ENCODE measurements at regions of chr22 and their contacts with region 1.

Region 1: GRCh38 chr22:35539910-35540594 is 579 bp upstream of the RASD2 start:
- DNase-seq: peak in 1 of 2 experiments; percentile 74
- H3K4me3 ChIP-seq: peak overlapping the region; percentile 44 to 73 (median 48)
- H3K27ac ChIP-seq: no peak overlapping the region
- H3K4me1 ChIP-seq: peaks cover 4 to 31% (median 17%) of the 10 kb centered on the region in 4 experiments
- H3K27me3 ChIP-seq: peaks cover 0 to 31% (median 19%) of the 10 kb centered on the region in 4 experiments; a peak in 5 of 7 replicates
- CTCF ChIP-seq: no peak
- EP300 ChIP-seq: no peak
- POLR2A ChIP-seq: no peak
- RAD21 ChIP-seq: no peak

Region 2: GRCh38 chr22:35430897-35431322 is 109.1 kb before region 1 on chr22:
- CTCF ChIA-PET with region 1: interaction called, 10 read pairs
- POLR2A ChIA-PET with region 1: interaction called, 9 read pairs
- DNase-seq: peak; percentile 49 to 98
- H3K4me3 ChIP-seq: no peak overlapping the region
- H3K27ac ChIP-seq: no peak overlapping the region
- H3K4me1 ChIP-seq: peaks cover under 1 to 10% (median 3%) of the 10 kb centered on the region in 4 experiments; a peak in 6 of 7 replicates
- H3K27me3 ChIP-seq: no peaks in the 10 kb centered on the region
- CTCF ChIP-seq: peak; percentile 85 to 98 (median 90)
- EP300 ChIP-seq: no peak
- POLR2A ChIP-seq: no peak
- RAD21 ChIP-seq: peak; percentile 96 to 97

Region 3: GRCh38 chr22:35462498-35463230 is 77.4 kb before region 1 on chr22:
- CTCF ChIA-PET with region 1: no interaction called
- POLR2A ChIA-PET with region 1: no interaction called
- DNase-seq: no peak
- H3K4me3 ChIP-seq: no peak overlapping the region
- H3K27ac ChIP-seq: no peak overlapping the region
- H3K4me1 ChIP-seq: peaks cover 6 to 13% (median 10%) of the 10 kb centered on the region in 4 experiments
- H3K27me3 ChIP-seq: no peaks in the 10 kb centered on the region
- CTCF ChIP-seq: no peak
- EP300 ChIP-seq: no peak
- POLR2A ChIP-seq: no peak
- RAD21 ChIP-seq: no peak

Region 4: DNA sequence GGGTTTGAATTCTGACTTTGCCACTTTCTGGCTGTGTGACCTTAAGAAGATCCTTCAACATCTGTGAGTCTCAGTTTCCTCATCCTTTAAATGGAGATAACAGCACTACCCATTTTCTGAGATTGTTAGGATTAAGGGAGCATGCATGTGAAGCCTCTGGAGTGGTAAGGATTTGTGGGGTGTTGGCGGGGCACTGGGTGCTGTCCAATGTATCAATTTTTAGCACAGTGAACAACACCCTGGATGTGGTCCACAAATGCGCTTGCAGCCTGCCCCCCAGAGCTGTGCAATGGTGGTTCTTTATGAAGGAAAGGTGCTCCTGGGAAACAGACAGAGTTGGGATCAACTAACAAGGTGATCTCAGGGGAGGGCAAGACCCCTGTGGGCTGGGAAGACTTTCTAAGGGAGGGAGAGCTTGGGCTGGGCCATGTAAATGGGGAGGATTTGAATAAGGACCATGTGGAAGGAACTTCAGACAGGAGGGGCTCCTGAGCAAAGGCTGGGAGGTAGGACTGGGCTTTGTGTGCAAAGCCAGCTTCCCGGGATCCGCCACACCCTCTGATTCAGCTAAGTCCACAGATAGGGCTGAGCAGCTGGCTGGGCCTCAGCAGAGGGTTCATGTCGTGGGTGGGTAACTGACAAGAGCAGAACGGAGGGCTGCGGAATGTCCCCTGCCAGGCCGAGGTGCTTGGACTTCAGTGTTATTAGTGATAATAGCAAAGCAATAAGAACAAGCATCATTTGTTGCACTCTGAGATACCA is 22.1 kb before region 1 on chr22:
- CTCF ChIA-PET with region 1: interaction called, 37 read pairs
- POLR2A ChIA-PET with region 1: interaction called, 3 read pairs
- DNase-seq: no peak
- H3K4me3 ChIP-seq: no peak overlapping the region
- H3K27ac ChIP-seq: no peak overlapping the region
- H3K4me1 ChIP-seq: peaks cover 0 to 6% (median 3%) of the 10 kb centered on the region in 4 experiments; a peak in 5 of 7 replicates
- H3K27me3 ChIP-seq: no peaks in the 10 kb centered on the region; a peak in 1 of 7 replicates
- CTCF ChIP-seq: no peak
- EP300 ChIP-seq: no peak
- POLR2A ChIP-seq: no peak
- RAD21 ChIP-seq: no peak

Region 5: GRCh38 chr22:35524966-35525686 is 14.9 kb before region 1 on chr22:
- CTCF ChIA-PET with region 1: interaction called, 37 read pairs
- POLR2A ChIA-PET with region 1: interaction called, 4 read pairs
- DNase-seq: no peak
- H3K4me3 ChIP-seq: no peak overlapping the region
- H3K27ac ChIP-seq: no peak overlapping the region
- H3K4me1 ChIP-seq: peaks cover 0 to 7% (median 1%) of the 10 kb centered on the region in 4 experiments; a peak in 3 of 7 replicates
- H3K27me3 ChIP-seq: no peaks in the 10 kb centered on the region; a peak in 1 of 7 replicates
- CTCF ChIP-seq: no peak
- EP300 ChIP-seq: no peak
- POLR2A ChIP-seq: no peak
- RAD21 ChIP-seq: no peak

Region 6: DNA sequence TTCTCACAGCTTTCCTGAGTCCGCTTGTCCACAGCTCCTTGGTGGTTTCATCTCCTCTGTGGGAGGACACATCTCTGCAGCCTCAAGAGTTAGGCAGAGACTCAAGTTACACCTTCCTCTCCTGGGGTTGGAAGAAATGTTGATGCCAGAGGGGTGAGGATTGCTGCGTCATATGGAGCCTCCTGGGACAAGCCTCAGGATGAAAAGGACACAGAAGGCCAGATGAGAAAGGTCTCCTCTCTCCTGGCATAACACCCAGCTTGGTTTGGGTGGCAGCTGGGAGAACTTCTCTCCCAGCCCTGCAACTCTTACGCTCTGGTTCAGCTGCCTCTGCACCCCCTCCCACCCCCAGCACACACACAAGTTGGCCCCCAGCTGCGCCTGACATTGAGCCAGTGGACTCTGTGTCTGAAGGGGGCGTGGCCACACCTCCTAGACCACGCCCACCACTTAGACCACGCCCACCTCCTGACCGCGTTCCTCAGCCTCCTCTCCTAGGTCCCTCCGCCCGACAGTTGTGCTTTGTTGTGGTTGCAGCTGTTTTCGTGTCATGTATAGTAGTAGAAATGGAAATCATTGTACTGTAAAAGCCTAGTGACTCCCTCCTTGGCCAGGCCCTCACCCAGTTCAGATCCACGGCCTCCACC is 12.3 kb after region 1 on chr22:
- CTCF ChIA-PET with region 1: interaction called, 51 read pairs
- POLR2A ChIA-PET with region 1: interaction called, 4 read pairs
- DNase-seq: peak in 1 of 2 experiments; percentile 94
- H3K4me3 ChIP-seq: no peak overlapping the region
- H3K27ac ChIP-seq: no peak overlapping the region
- H3K4me1 ChIP-seq: peaks cover 0 to 23% (median 11%) of the 10 kb centered on the region in 4 experiments; a peak in 6 of 7 replicates
- H3K27me3 ChIP-seq: no peaks in the 10 kb centered on the region; a peak in 1 of 7 replicates
- CTCF ChIP-seq: no peak
- EP300 ChIP-seq: no peak
- POLR2A ChIP-seq: no peak
- RAD21 ChIP-seq: no peak